MCF 10A (cell line): ENCODE measurements at regions of chr1 and their contacts with region 1.

Region 1: GRCh38 chr1:165597883-165598675 is 33.0 kb upstream of the MGST3 start:
- DNase-seq: peak; percentile 99
- H3K4me3 Mint-ChIP-seq: peak overlapping the region; percentile 89
- H3K27ac Mint-ChIP-seq: peak overlapping the region; percentile 95
- H3K4me1 Mint-ChIP-seq: peaks cover 23% of the 10 kb centered on the region
- H3K27me3 Mint-ChIP-seq: peaks cover 27% of the 10 kb centered on the region
- CTCF ChIP-seq: no peak

Region 2: GRCh38 chr1:165114022-165114888 is 483.8 kb before region 1 on chr1:
- CTCF ChIA-PET with region 1: interaction called, 29 read pairs
- POLR2A ChIA-PET with region 1: interaction called, 4 read pairs
- intact Hi-C with region 1: loop called (anchors 2 kb)
- DNase-seq: peak; percentile 85
- H3K4me3 Mint-ChIP-seq: no peak overlapping the region
- H3K27ac Mint-ChIP-seq: no peak overlapping the region
- H3K4me1 Mint-ChIP-seq: peaks cover 17% of the 10 kb centered on the region
- H3K27me3 Mint-ChIP-seq: peaks cover 16% of the 10 kb centered on the region
- CTCF ChIP-seq: peak; percentile 96

Region 3: DNA sequence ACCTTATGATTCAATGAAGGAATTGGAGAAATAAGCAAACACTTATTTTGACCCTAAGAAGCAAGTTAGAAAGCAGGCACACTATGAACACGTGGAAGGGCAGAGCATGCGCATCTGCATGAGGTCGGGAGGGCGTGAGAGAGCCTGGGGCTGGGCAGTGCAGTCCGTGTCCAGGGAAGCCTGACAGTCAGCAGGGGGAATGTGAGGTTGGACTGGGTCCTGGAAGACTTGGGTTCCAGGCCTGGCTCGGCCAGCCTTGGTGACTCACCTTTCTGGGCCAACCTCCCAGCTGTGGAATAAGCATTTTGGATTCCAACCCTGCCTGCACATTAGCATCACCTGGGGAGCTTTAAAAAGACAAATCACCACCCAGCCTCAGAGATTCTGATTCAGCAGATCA is 215.0 kb before region 1 on chr1:
- CTCF ChIA-PET with region 1: interaction called, 28 read pairs
- POLR2A ChIA-PET with region 1: interaction called, 3 read pairs
- intact Hi-C with region 1: no loop called
- DNase-seq: peak; percentile 95
- H3K4me3 Mint-ChIP-seq: no peak overlapping the region
- H3K27ac Mint-ChIP-seq: peak overlapping the region; percentile 5
- H3K4me1 Mint-ChIP-seq: peaks cover 19% of the 10 kb centered on the region
- H3K27me3 Mint-ChIP-seq: peaks cover 22% of the 10 kb centered on the region
- CTCF ChIP-seq: no peak

Region 4: DNA sequence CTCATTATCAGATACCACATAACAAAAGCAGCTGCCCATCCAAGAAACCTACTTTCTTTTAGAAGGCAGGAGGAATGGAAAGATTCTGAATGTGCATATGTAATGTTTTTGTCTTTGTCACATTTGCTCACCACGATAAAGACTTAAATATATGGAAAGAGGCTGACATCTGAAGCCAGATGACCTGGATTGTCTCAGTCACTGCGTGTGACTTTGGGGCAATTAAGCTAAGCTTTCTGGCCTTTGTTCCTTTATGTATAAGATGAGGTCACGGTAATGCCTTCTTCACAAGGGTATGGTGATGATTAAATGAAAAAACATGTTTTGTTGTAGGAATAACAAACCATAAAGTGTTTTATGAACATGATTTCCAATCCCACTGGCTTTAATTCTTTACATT is 11.6 kb before region 1 on chr1:
- CTCF ChIA-PET with region 1: interaction called, 23 read pairs
- POLR2A ChIA-PET with region 1: no interaction called
- intact Hi-C with region 1: no loop called
- DNase-seq: no peak
- H3K4me3 Mint-ChIP-seq: no peak overlapping the region
- H3K27ac Mint-ChIP-seq: no peak overlapping the region
- H3K4me1 Mint-ChIP-seq: no peaks in the 10 kb centered on the region
- H3K27me3 Mint-ChIP-seq: peaks cover 59% of the 10 kb centered on the region
- CTCF ChIP-seq: no peak

Region 5: DNA sequence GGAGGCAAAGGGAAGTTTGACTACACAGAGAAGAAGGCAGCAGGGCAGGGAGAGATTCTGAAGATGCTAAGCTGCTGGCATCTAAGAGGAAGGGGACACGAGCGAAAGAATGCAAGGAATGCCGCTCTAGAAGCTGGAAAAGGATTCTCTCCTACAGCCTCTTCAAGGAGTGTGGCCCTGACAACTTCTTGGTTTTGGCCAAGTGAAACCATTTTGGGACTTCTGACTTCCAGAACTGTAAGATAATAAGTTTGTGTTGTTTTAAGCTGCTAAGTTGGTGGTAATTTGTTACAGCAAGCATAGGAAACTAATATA is 61.5 kb after region 1 on chr1:
- CTCF ChIA-PET with region 1: interaction called, 77 read pairs
- POLR2A ChIA-PET with region 1: no interaction called
- intact Hi-C with region 1: no loop called
- DNase-seq: no peak
- H3K4me3 Mint-ChIP-seq: no peak overlapping the region
- H3K27ac Mint-ChIP-seq: no peak overlapping the region
- H3K4me1 Mint-ChIP-seq: no peaks in the 10 kb centered on the region
- H3K27me3 Mint-ChIP-seq: no peaks in the 10 kb centered on the region
- CTCF ChIP-seq: no peak

Region 6: GRCh38 chr1:165738794-165739193 is 140.7 kb after region 1 on chr1:
- CTCF ChIA-PET with region 1: interaction called, 11 read pairs
- POLR2A ChIA-PET with region 1: no interaction called
- intact Hi-C with region 1: no loop called
- DNase-seq: no peak
- H3K4me3 Mint-ChIP-seq: no peak overlapping the region
- H3K27ac Mint-ChIP-seq: no peak overlapping the region
- H3K4me1 Mint-ChIP-seq: peaks cover 10% of the 10 kb centered on the region
- H3K27me3 Mint-ChIP-seq: no peaks in the 10 kb centered on the region
- CTCF ChIP-seq: no peak

Region 7: GRCh38 chr1:166432655-166433054 is 834.6 kb after region 1 on chr1:
- CTCF ChIA-PET with region 1: interaction called, 5 read pairs
- POLR2A ChIA-PET with region 1: no interaction called
- intact Hi-C with region 1: loop called (anchors 5 kb)
- DNase-seq: no peak
- H3K4me3 Mint-ChIP-seq: no peak overlapping the region
- H3K27ac Mint-ChIP-seq: no peak overlapping the region
- H3K4me1 Mint-ChIP-seq: no peaks in the 10 kb centered on the region
- H3K27me3 Mint-ChIP-seq: no peaks in the 10 kb centered on the region
- CTCF ChIP-seq: no peak